ENCODE measurements at regions of chr19 and their contacts with region 1.

Region 1: DNA sequence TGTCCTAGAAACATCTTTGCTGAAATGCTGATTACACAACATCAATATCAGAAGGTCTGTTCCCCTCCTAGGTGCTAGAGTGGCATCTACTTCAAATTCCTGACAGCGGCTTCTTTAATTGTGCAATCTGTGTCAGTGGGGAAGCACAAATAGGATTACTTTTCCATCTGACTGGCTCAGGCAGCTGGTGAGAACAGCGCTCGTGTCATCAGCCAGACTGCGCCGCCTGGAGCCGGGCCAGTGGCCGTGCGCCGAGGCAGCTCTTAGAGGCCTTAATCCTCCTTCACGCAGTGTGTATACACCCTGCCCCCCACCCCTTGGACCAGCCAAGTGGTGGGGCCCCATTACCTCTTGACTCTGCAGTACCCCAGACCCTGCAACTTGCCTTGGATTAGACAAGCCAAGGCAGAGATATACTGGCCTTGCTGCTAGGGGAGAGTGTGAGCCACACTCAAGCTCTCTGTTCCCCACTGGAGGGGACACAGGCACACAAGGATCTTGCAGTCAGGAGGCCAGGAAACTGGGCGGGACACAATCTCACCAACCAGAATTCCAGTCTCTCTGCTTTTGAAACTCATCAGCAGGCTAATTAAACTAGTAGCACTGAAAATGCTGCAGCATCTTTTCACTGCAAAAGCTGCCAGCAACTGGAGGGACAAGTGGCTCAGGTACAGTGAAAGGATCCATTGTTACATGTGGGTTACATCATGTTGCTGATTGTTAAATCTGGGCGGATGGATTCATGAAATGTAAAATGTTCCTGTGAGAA is 48.9 kb upstream of the EPHX3 start:
- DNase-seq: peak; percentile 20 to 59 (median 44)
- H3K4me3 ChIP-seq: no peak overlapping the region
- H3K4me3 Mint-ChIP-seq: peak overlapping the region; percentile 6 to 48
- H3K27ac ChIP-seq: peak overlapping the region; percentile 23 to 69
- H3K27ac Mint-ChIP-seq: peak overlapping the region in 5 of 7 donors; percentile 58 to 81 (median 68)
- H3K4me1 ChIP-seq: peaks cover 61 to 77% of the 10 kb centered on the region in 2 donors
- H3K4me1 Mint-ChIP-seq: peaks cover 86% of the 10 kb centered on the region
- H3K27me3 ChIP-seq: no peaks in the 10 kb centered on the region
- H3K27me3 Mint-ChIP-seq: peaks cover 0 to 3% (median 3%) of the 10 kb centered on the region in 3 donors
- CTCF ChIP-seq: peak; percentile 28

Region 2: GRCh38 chr19:15332311-15332996 is 51.4 kb after region 1 on chr19 and contains the start of gene BRD4:
- intact Hi-C with region 1: loop called in 1 of 2 experiments (anchors 10 kb)
- DNase-seq: peak in 2 of 3 donors; percentile 57 to 73
- H3K4me3 ChIP-seq: peak within 1 kb of the TSS; percentile 89 to 98 (median 90)
- H3K4me3 Mint-ChIP-seq: peak within 1 kb of the TSS; percentile 98 to 99
- H3K27ac ChIP-seq: peak within 1 kb of the TSS; percentile 81 to 97
- H3K27ac Mint-ChIP-seq: peak within 1 kb of the TSS; percentile 95 to 99 (median 99)
- H3K4me1 ChIP-seq: peaks cover 50 to 62% of the 10 kb centered on the region in 2 donors
- H3K4me1 Mint-ChIP-seq: peaks cover 50% of the 10 kb centered on the region
- H3K27me3 ChIP-seq: no peaks in the 10 kb centered on the region
- H3K27me3 Mint-ChIP-seq: peaks cover 0 to 5% (median 0%) of the 10 kb centered on the region in 3 donors
- CTCF ChIP-seq: no peak
- polyA plus RNA-seq, gene BRD4: 3.7 to 19.2 (median 4.2) TPM